Common myeloid progenitor, CD34-positive (primary cell): ENCODE measurements at regions of chr17 and their contacts with region 1.

Region 1: GRCh38 chr17:43857942-43858600 is 11.1 kb downstream of the CD300LG start:
- DNase-seq: no peak
- H3K4me3 ChIP-seq: no peak overlapping the region
- H3K27ac ChIP-seq: no peak overlapping the region
- H3K4me1 ChIP-seq: peaks cover 0 to 21% (median 13%) of the 10 kb centered on the region in 4 experiments
- H3K27me3 ChIP-seq: no peaks in the 10 kb centered on the region

Region 2: DNA sequence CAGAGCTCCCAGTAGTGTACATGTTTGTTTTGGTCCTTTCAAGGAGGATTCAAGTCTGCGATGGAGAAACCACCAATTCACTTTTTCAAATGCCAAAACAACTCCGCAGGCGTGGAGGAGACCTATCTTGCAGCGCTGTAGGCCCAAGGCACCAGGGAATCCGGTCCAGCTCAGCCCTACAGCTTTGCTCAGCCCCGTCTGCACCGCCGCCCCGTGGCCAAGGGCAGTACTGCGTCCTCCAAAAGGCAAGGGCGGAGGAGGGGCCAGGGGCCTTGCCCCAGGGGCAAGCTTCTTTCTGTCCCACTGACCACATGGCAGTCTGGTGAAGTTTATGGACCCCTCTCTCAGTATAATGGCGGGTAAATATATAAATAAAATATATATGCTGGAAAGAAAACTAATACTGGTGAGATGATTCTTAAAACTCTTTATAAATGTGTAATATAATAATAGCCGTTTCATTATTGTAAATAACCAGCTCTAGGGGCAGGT is 11.8 kb before region 1 on chr17:
- CTCF ChIA-PET with region 1: interaction called, 19 read pairs
- POLR2A ChIA-PET with region 1: no interaction called
- DNase-seq: peak; percentile 68 to 74 (median 71)
- H3K4me3 ChIP-seq: no peak overlapping the region
- H3K27ac ChIP-seq: no peak overlapping the region
- H3K4me1 ChIP-seq: peaks cover 0 to 15% (median 8%) of the 10 kb centered on the region in 4 experiments
- H3K27me3 ChIP-seq: no peaks in the 10 kb centered on the region

Region 3: GRCh38 chr17:43952717-43953666 is 94.9 kb after region 1 on chr17:
- CTCF ChIA-PET with region 1: no interaction called
- POLR2A ChIA-PET with region 1: no interaction called
- DNase-seq: peak; percentile 57 to 86 (median 85)
- H3K4me3 ChIP-seq: peak overlapping the region in 2 of 7 experiments; percentile 25 to 40
- H3K27ac ChIP-seq: no peak overlapping the region
- H3K4me1 ChIP-seq: peaks cover 0 to 26% (median 12%) of the 10 kb centered on the region in 4 experiments
- H3K27me3 ChIP-seq: peaks cover 0 to 31% (median 25%) of the 10 kb centered on the region in 5 experiments